ENCODE measurements at regions of chr10 and their contacts with region 1.

Region 1: GRCh38 chr10:86399879-86400704 is 33.5 kb upstream of the GRID1 start:
- DNase-seq: peak; percentile 98
- ATAC-seq: peak; percentile 81 to 97 (median 88)
- H3K4me3 ChIP-seq: peak overlapping the region; percentile 59 to 76 (median 68)
- H3K27ac ChIP-seq: peak overlapping the region; percentile 65 to 86 (median 77)
- H3K4me1 ChIP-seq: peaks cover 0 to 21% (median 3%) of the 10 kb centered on the region in 4 donors
- H3K27me3 ChIP-seq: no peaks in the 10 kb centered on the region
- CTCF ChIP-seq: peak; percentile 98 to 99 (median 98)
- POLR2A ChIP-seq: no peak

Region 2: DNA sequence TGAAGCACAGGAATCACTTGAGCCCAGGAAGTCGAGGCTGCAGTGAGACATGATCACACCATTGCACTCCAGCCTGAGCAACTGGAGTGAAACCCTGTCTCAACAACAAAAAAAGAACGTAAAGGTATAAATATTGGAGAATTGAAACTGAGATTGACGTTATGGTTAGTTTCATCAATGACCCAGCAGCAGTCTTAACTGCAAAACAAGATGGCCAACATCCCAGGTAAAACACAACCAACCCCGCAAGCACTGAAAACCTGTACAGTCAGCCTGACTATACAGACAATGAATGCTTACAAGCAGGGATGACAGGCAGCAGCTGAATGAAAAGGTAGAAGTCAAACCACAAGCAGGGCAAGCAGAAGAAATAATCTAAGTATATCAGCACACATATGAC is 86.8 kb after region 1 on chr10:
- intact Hi-C with region 1: no loop called
- DNase-seq: no peak
- ATAC-seq: no peak
- H3K4me3 ChIP-seq: no peak overlapping the region
- H3K27ac ChIP-seq: no peak overlapping the region
- H3K4me1 ChIP-seq: peaks cover 0 to 5% (median 0%) of the 10 kb centered on the region in 4 donors
- H3K27me3 ChIP-seq: no peaks in the 10 kb centered on the region
- CTCF ChIP-seq: no peak
- POLR2A ChIP-seq: no peak

Region 3: GRCh38 chr10:86535057-86535882 is 135.2 kb after region 1 on chr10:
- intact Hi-C with region 1: loop called in 1 of 2 experiments (anchors 10 kb)
- DNase-seq: peak; percentile 94 to 97 (median 96)
- ATAC-seq: peak; percentile 95 to 98 (median 96)
- H3K4me3 ChIP-seq: peak overlapping the region; percentile 42 to 59 (median 56)
- H3K27ac ChIP-seq: peak overlapping the region; percentile 60 to 64 (median 61)
- H3K4me1 ChIP-seq: peaks cover 0 to 8% (median 0%) of the 10 kb centered on the region in 4 donors
- H3K27me3 ChIP-seq: no peaks in the 10 kb centered on the region
- CTCF ChIP-seq: no peak
- POLR2A ChIP-seq: peak; percentile 34

Region 4: DNA sequence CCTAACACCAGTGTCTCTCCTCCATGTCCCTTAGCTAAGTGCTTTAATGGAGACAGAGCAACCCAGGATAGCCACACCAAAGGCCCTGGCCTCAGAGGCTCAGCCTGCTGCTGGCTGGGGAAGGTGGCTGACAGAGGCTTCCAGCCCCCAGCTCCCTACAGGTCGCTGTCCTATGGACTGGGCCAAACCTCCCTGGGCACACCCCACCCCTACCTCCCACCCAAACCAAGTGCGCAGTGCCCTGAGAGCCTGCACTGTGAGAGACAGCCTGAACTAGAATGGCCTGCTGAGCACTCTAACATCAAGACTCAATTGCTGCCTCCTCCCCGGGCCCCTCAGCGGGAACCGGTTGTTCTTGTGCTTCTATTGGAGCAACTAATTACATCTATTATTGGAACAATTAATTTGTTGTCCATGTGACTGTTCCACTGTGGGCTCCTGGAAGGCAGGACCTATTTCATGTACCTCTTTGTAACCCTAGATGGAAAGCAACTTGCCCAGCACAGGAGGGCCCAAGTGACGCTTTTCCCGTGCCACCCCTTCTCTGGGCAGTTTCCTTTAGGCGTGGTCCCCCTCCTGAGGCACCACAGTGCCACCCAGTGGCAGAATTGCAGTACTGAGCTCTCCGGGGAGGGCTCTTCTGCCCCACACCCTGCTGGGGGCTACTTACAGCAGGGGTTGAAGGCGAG is 185.1 kb after region 1 on chr10:
- intact Hi-C with region 1: loop called in 1 of 2 experiments (anchors 5 kb)
- DNase-seq: peak; percentile 69 to 74 (median 72)
- ATAC-seq: peak; percentile 97 to 99 (median 98)
- H3K4me3 ChIP-seq: no peak overlapping the region
- H3K27ac ChIP-seq: no peak overlapping the region
- H3K4me1 ChIP-seq: no peaks in the 10 kb centered on the region
- H3K27me3 ChIP-seq: no peaks in the 10 kb centered on the region
- CTCF ChIP-seq: peak; percentile 97 to 99 (median 98)
- POLR2A ChIP-seq: no peak